Activated naive CD4-positive, alpha-beta T cell treated with anti-CD3 and anti-CD28 coated beads, Interleukin-2, amount 10 ng/mL, durations not matched to agents 7 days and 5 days (primary cell): ENCODE measurements at regions of chr5 and their contacts with region 1.

Region 1: DNA sequence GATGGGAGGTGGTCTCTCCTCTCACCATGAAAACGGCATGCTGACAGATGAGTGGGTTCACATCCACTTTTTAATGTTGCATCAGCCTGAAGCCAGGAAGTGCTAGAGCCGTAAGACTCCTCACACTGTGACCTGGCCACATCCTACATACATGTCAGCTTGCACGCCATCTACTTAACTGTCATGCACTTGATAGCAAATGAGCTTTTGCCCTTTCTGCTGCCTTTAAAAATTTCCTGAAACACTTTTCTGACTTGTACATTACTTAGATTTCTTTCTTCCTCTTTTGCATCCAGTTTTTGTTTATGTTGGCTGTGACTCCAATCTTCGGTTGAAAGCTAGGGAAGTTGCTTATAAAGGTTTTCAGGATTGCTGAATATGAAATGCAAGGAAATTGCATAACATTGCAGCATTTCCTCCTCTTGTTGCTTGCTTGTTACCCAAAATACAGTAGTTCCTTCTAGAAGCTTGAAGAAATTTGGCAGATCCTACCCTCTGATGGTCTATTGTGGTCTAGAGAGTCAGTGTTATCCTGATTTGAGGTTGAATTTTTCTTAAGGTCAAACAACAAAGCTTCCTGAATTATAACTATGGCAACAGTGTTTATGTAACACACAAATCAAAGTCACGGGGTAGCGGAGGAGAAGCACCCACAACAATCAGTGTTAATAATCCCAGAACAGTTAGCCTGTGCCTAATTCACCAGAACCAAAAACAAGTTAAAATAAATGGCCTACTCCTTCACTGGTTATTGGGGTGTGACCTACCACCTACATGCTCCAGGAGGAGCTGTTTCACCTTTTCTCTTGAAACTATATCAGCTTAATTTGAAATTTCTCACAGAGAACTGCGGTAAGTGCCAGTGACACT is 232.5 kb downstream of the ARHGAP26 start:
- DNase-seq: peak; percentile 80
- H3K4me3 Mint-ChIP-seq: peak overlapping the region; percentile 40
- H3K27ac Mint-ChIP-seq: peak overlapping the region; percentile 99
- H3K4me1 Mint-ChIP-seq: peaks cover 80% of the 10 kb centered on the region
- H3K27me3 Mint-ChIP-seq: no peaks in the 10 kb centered on the region

Region 2: DNA sequence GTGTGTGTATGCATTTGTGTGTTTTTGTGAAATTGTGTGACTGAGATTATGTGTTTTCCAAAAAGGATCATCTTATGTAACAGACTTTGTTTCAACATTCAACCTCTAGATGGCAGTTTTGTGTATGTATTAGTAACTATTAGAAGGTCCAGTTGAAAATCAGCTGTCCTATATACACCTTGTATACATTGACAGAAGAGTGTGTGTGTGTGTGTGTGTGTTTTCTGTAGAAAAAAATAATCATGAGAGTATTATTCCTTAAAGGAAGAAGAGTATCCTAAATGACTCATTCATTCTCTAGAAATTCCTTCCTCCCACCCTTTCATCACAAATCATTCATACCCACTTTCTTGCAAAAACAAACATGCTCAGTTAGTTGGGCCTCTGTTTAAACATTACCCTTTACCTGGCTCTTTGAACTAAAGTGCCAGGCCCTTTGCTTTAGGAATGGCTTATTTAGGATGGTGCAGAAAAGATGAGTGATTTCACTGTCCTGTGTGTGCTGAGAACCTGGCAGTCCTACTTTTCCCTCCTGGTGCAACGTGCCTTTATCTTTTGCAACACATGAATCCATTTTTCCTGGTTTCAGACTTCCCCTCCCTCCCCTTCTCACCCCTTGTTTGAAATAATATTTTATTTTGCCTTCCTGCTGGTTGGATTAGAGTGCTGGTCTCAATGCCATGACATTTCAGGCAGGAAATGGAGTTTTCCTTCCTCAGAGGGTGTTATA is 80.3 kb before region 1 on chr5:
- CTCF ChIA-PET with region 1: interaction called, 29 read pairs
- DNase-seq: no peak
- H3K4me3 Mint-ChIP-seq: no peak overlapping the region
- H3K27ac Mint-ChIP-seq: peak overlapping the region; percentile 47
- H3K4me1 Mint-ChIP-seq: peaks cover 23% of the 10 kb centered on the region
- H3K27me3 Mint-ChIP-seq: no peaks in the 10 kb centered on the region

Region 3: GRCh38 chr5:143235423-143235822 is 232.7 kb after region 1 on chr5:
- CTCF ChIA-PET with region 1: no interaction called
- DNase-seq: no peak
- H3K4me3 Mint-ChIP-seq: no peak overlapping the region
- H3K27ac Mint-ChIP-seq: no peak overlapping the region
- H3K4me1 Mint-ChIP-seq: peaks cover 9% of the 10 kb centered on the region
- H3K27me3 Mint-ChIP-seq: peaks cover 10% of the 10 kb centered on the region

Region 4: DNA sequence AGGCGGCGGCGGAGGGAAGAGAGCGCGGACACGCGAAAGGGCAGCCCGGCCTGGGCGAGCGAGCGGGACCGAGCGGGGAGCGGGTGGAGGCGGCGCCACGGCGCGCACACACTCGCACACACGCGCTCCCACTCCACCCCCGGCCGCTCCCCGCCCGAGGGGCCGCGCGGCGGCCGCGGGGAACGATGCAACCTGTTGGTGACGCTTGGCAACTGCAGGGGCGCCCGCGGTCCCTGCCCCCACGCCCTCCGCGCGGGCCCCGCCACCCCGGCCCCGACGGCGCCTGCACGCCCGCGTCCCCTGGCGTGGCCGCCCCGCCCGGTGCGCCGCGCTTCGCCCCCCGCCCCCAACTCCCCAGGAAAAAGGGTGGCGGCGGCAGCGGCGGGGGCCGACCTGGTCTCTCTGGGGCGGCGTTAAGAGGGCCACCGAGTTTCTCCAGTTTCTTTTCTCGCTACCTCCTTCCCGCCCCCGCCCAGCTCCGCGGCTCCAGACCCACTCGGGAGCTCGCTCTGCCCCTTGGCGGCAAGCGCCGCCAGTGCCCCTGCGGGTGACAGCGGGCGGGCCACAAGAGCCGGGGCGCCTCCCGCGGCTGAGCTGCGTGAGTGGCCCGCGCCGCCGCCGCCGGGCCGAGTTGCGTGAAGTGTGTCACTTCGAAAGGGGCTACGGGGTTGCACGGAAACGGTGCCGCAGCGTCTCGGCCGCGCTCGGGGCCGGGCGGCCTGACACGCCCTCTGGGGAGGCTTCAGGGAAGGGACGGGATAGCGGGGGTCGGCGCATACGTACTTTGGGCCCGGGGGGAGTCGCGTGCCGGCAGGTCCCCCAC is 401.1 kb after region 1 on chr5 and contains the start of gene NR3C1:
- CTCF ChIA-PET with region 1: interaction called, 18 read pairs
- DNase-seq: peak; percentile 87
- H3K4me3 Mint-ChIP-seq: peak within 1 kb of the TSS; percentile 87
- H3K27ac Mint-ChIP-seq: peak within 1 kb of the TSS; percentile 98
- H3K4me1 Mint-ChIP-seq: peaks cover 53% of the 10 kb centered on the region
- H3K27me3 Mint-ChIP-seq: no peaks in the 10 kb centered on the region

Region 5: GRCh38 chr5:143824851-143825720 is 822.4 kb after region 1 on chr5:
- CTCF ChIA-PET with region 1: interaction called, 30 read pairs
- DNase-seq: peak; percentile 87
- H3K4me3 Mint-ChIP-seq: no peak overlapping the region
- H3K27ac Mint-ChIP-seq: no peak overlapping the region
- H3K4me1 Mint-ChIP-seq: peaks cover 21% of the 10 kb centered on the region
- H3K27me3 Mint-ChIP-seq: no peaks in the 10 kb centered on the region

Region 6: GRCh38 chr5:144191998-144192397 is 1189.3 kb after region 1 on chr5:
- CTCF ChIA-PET with region 1: interaction called, 10 read pairs
- DNase-seq: peak; percentile 29
- H3K4me3 Mint-ChIP-seq: no peak overlapping the region
- H3K27ac Mint-ChIP-seq: no peak overlapping the region
- H3K4me1 Mint-ChIP-seq: no peaks in the 10 kb centered on the region
- H3K27me3 Mint-ChIP-seq: peaks cover 3% of the 10 kb centered on the region